K562 (cell line): ENCODE measurements at regions of chr17 and their contacts with region 1.

Region 1: GRCh38 chr17:72556944-72557826 is 436.4 kb downstream of the SOX9 start:
- DNase-seq: peak; percentile 67 to 76 (median 74)
- ATAC-seq: peak; percentile 89
- H3K4me3 ChIP-seq: no peak overlapping the region
- H3K27ac ChIP-seq: no peak overlapping the region
- H3K4me1 ChIP-seq: peaks cover 0 to 4% of the 10 kb centered on the region in 2 experiments; a peak in 1 of 5 replicates
- H3K27me3 ChIP-seq: peaks cover 0 to 7% of the 10 kb centered on the region in 2 experiments; a peak in 1 of 5 replicates
- CTCF ChIP-seq: peak; percentile 83 to 86 (median 85)
- EP300 ChIP-seq: no peak
- POLR2A ChIP-seq: no peak
- RAD21 ChIP-seq: peak; percentile 44 to 77

Region 2: GRCh38 chr17:73187203-73187769 is 630.1 kb after region 1 on chr17:
- CTCF ChIA-PET with region 1: interaction called, 5 read pairs
- POLR2A ChIA-PET with region 1: interaction called, 3 read pairs
- in situ Hi-C with region 1: loop called (anchors 10 kb)
- intact Hi-C with region 1: loop called (anchors 2 kb)
- DNase-seq: no peak
- ATAC-seq: no peak
- H3K4me3 ChIP-seq: no peak overlapping the region
- H3K27ac ChIP-seq: no peak overlapping the region
- H3K4me1 ChIP-seq: peaks cover 6 to 7% of the 10 kb centered on the region in 2 experiments; a peak in 3 of 5 replicates
- H3K27me3 ChIP-seq: no peaks in the 10 kb centered on the region
- CTCF ChIP-seq: no peak
- EP300 ChIP-seq: no peak
- POLR2A ChIP-seq: no peak
- RAD21 ChIP-seq: no peak

Region 3: DNA sequence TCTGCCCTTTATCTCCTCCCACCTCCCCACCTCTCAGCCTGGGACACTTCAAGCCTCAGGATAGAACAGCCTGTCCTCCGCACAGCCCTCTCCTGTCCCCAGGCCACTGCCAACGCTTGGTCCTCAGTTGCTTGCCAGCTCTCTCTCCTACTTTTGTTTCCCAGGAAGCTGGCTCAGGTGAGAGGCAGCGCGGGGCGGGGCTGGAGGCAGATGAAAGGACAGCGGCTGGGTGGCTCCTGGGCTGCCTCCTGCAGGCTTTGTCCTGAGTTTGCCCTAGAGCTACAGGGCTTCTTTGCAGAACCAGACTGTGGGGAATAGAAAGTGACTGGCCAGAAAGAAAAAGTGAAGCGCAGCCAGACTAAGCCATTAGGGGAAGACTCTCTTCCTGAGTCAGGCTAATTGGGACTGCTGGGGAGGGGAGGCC is 802.8 kb after region 1 on chr17:
- CTCF ChIA-PET with region 1: no interaction called
- POLR2A ChIA-PET with region 1: no interaction called
- in situ Hi-C with region 1: loop called (anchors 10 kb)
- intact Hi-C with region 1: loop called (anchors 10 kb)
- DNase-seq: no peak
- ATAC-seq: peak; percentile 50
- H3K4me3 ChIP-seq: no peak overlapping the region
- H3K27ac ChIP-seq: no peak overlapping the region
- H3K4me1 ChIP-seq: peaks cover 0 to 10% of the 10 kb centered on the region in 2 experiments; a peak in 2 of 5 replicates
- H3K27me3 ChIP-seq: peaks cover 51 to 88% of the 10 kb centered on the region in 2 experiments; a peak in 4 of 5 replicates
- CTCF ChIP-seq: peak in 1 of 3 experiments; percentile 10; a peak in 1 of 6 replicates
- EP300 ChIP-seq: no peak
- POLR2A ChIP-seq: no peak
- RAD21 ChIP-seq: no peak